Dendritic cell treated with granulocyte-macrophage colony-stimulating factor and Interleukin-4, amounts not matched to agents 40 ng/mL and 50 ng/mL, for 4 days (primary cell): ENCODE measurements at regions of chr18 and their contacts with region 1.

Region 1: GRCh38 chr18:2774669-2775068 is 72.1 kb upstream of the EMILIN2 start:
- H3K4me3 Mint-ChIP-seq: no peak overlapping the region
- H3K27ac Mint-ChIP-seq: no peak overlapping the region
- H3K4me1 Mint-ChIP-seq: no peaks in the 10 kb centered on the region
- H3K27me3 Mint-ChIP-seq: no peaks in the 10 kb centered on the region

Region 2: DNA sequence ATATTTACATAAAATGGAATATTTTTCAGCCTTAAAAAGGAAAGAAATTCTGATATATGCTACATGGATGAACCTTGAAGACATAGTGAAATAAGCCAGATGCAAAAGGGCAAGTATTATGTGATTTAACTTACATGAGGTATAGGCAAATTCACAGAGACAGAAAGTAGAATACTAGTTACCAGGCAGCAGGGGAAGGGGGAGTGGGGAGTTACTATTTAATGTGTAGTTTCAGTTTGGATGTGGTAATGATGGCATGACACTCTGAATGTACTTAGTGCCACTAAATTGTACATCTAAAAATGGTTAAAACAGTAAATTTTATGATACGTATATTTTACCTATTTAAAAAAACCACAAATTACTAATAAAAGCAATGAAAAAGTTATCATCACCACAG is 215.4 kb before region 1 on chr18:
- intact Hi-C with region 1: no loop called
- H3K4me3 Mint-ChIP-seq: no peak overlapping the region
- H3K27ac Mint-ChIP-seq: no peak overlapping the region
- H3K4me1 Mint-ChIP-seq: no peaks in the 10 kb centered on the region
- H3K27me3 Mint-ChIP-seq: no peaks in the 10 kb centered on the region

Region 3: GRCh38 chr18:2741651-2742050 is 33.0 kb before region 1 on chr18:
- intact Hi-C with region 1: loop called (anchors 5 kb)
- H3K4me3 Mint-ChIP-seq: no peak overlapping the region
- H3K27ac Mint-ChIP-seq: no peak overlapping the region
- H3K4me1 Mint-ChIP-seq: no peaks in the 10 kb centered on the region
- H3K27me3 Mint-ChIP-seq: no peaks in the 10 kb centered on the region

Region 4: GRCh38 chr18:2917259-2918047 is 142.8 kb after region 1 on chr18:
- intact Hi-C with region 1: loop called (anchors 5 kb)
- H3K4me3 Mint-ChIP-seq: no peak overlapping the region
- H3K27ac Mint-ChIP-seq: peak overlapping the region; percentile 71
- H3K4me1 Mint-ChIP-seq: peaks cover 25% of the 10 kb centered on the region
- H3K27me3 Mint-ChIP-seq: no peaks in the 10 kb centered on the region

Region 5: DNA sequence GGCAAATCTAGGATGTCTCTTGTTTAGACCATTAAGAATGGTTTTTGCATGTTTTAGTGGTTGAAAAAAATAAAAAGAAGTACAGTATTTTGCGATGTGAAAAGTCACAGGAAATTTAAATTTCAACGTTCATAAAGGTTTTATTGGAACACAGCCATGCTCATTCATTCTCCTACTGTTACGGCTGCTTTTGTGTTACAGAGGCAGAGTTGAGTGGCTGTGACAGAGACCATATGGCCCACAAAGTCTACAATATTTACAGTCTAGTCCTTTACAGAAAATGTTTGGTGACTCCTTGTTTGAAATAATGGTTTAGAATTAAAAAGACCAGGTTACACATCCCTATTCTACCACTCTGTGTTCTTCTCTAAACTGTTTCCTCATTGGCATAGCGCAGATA is 397.0 kb after region 1 on chr18:
- intact Hi-C with region 1: no loop called
- H3K4me3 Mint-ChIP-seq: peak overlapping the region; percentile 26
- H3K27ac Mint-ChIP-seq: peak overlapping the region; percentile 87
- H3K4me1 Mint-ChIP-seq: peaks cover 52% of the 10 kb centered on the region
- H3K27me3 Mint-ChIP-seq: no peaks in the 10 kb centered on the region